ENCODE measurements at regions of chr17 and their contacts with region 1.

Region 1: DNA sequence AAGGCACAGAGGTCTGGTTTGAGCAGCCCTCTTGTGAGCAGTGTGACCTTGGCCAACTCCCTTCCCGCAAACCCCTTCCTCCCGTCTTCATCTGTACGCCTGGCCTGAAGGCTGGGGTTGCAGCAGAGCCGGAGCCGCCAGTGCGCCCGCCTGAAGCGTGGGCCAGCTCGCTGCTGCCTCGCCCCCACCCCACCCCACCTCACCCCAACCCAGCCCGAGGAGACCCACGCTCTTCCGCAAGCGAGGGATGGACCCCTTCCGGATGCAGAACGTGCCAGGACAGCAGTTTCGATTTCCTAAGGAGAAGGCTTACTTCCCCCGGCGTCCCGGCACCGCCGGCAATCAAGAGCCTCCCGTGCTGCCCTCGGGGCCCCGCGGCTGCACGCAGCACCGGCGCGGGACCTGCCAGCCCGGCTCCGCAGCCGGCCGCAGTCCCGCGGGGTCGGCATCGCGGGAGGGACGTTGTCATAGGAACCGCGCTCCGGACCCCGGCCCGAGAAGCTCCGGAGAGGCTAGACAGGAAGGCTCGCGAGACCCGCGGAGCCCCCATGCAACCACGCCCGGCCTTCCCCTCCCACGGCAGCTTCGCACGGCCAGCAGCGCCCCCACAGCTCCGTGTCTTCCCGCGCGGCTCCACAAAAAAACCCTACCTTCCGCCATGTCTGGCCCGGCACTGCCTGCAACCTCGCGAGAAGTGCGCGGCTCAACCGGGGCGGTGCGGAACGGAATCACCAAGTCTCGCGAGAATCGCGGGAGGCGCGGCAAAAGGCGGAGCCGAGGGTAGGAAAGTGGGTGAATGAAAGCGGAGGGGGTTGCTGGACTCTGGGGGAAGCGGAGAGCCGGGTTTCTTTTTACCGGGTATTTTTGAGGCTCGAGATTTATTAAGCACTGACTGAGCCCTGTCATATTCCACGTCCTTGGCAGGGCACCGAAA is at the start of gene ANKFY1:
- DNase-seq: peak; percentile 60
- H3K4me3 ChIP-seq: peak within 1 kb of the TSS; percentile 91
- CTCF ChIP-seq: peak; percentile 17

Region 2: GRCh38 chr17:4100883-4101756 is 162.4 kb before region 1 on chr17:
- CTCF ChIA-PET with region 1: no interaction called
- POLR2A ChIA-PET with region 1: no interaction called
- DNase-seq: no peak
- H3K4me3 ChIP-seq: no peak overlapping the region
- CTCF ChIP-seq: no peak

Region 3: DNA sequence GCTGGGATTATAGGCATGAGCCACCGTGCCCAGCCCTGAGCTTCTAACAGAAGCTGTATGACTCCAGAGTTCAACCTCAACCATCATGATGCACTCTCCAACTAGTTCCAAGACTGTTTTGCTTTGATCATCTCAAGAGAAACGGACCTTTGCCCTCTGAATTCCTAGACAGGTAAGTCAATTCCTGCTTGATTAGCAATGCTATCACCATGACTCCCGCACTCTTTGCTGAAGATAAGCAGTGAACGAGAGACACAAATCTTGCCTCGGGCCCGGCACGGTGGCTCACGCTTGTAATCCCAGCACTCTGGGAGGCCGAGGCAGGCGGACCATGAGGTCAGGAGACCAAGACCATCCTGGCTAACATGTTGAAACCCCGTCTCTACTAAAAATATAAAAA is 22.0 kb before region 1 on chr17:
- CTCF ChIA-PET with region 1: interaction called, 13 read pairs
- POLR2A ChIA-PET with region 1: no interaction called
- DNase-seq: no peak
- H3K4me3 ChIP-seq: no peak overlapping the region
- CTCF ChIP-seq: no peak

Region 4: DNA sequence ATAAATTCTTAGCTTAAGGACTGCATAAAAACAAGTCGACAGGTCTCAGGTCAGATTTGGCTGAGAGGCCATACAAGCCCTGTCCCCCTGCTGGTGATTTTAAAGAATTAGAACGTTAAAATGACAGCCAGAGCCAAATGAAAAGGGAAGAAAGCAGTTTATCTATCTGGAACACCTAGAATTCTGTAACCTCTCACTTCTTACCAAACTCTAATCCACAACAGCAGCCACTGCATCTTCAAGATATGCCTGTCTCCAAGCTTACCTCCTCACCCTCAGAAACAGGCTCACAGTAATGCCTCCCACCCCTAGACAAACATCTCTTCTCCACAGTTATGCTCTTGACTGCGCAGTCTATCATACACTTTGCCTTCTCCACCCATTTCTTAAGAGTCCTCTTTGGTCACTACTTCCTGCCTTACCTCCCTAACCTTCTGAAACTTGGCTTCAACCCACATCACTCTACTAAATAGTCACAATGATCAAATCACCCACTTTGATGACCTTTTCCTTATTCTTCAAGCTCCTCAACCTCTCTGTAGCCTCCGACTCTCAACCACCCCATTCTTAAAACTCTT is 14.0 kb before region 1 on chr17:
- CTCF ChIA-PET with region 1: interaction called, 72 read pairs
- POLR2A ChIA-PET with region 1: no interaction called
- DNase-seq: no peak
- H3K4me3 ChIP-seq: no peak overlapping the region
- CTCF ChIP-seq: peak; percentile 41